ENCODE measurements at regions of chr3 and their contacts with region 1.

Region 1: DNA sequence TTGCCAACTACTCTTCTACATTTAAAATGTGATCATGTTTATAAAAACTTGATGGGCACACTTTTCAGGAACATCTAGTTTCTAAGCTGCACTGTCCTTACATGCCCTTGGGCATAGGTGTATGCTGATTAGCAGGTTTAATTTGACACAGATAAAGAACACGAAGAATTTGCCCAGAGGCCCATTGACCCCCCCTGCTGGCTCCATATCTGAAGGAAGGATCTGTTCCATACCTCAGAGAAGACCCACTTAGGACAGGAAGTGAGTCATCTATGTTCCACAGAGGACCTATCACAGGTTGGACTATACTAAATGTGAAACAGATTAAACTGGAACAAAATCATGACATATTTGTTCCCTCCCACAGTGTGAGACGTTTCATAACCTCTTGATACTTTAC is 92.8 kb upstream of the LPP start:
- DNase-seq: peak; percentile 81
- H3K4me3 Mint-ChIP-seq: peak overlapping the region; percentile 44
- H3K27ac Mint-ChIP-seq: peak overlapping the region; percentile 80
- H3K4me1 Mint-ChIP-seq: peaks cover 35% of the 10 kb centered on the region
- H3K27me3 Mint-ChIP-seq: no peaks in the 10 kb centered on the region

Region 2: GRCh38 chr3:187986514-187986934 is 74.6 kb before region 1 on chr3:
- CTCF ChIA-PET with region 1: no interaction called
- POLR2A ChIA-PET with region 1: no interaction called
- intact Hi-C with region 1: loop called (anchors 2 kb)
- DNase-seq: peak; percentile 77
- H3K4me3 Mint-ChIP-seq: peak overlapping the region; percentile 2
- H3K27ac Mint-ChIP-seq: peak overlapping the region; percentile 83
- H3K4me1 Mint-ChIP-seq: peaks cover 56% of the 10 kb centered on the region
- H3K27me3 Mint-ChIP-seq: no peaks in the 10 kb centered on the region

Region 3: GRCh38 chr3:188123170-188123905 is 62.2 kb after region 1 on chr3:
- CTCF ChIA-PET with region 1: no interaction called
- POLR2A ChIA-PET with region 1: no interaction called
- intact Hi-C with region 1: loop called (anchors 5 kb)
- DNase-seq: peak; percentile 21
- H3K4me3 Mint-ChIP-seq: no peak overlapping the region
- H3K27ac Mint-ChIP-seq: peak overlapping the region; percentile 63
- H3K4me1 Mint-ChIP-seq: peaks cover 20% of the 10 kb centered on the region
- H3K27me3 Mint-ChIP-seq: peaks cover 1% of the 10 kb centered on the region

Region 4: DNA sequence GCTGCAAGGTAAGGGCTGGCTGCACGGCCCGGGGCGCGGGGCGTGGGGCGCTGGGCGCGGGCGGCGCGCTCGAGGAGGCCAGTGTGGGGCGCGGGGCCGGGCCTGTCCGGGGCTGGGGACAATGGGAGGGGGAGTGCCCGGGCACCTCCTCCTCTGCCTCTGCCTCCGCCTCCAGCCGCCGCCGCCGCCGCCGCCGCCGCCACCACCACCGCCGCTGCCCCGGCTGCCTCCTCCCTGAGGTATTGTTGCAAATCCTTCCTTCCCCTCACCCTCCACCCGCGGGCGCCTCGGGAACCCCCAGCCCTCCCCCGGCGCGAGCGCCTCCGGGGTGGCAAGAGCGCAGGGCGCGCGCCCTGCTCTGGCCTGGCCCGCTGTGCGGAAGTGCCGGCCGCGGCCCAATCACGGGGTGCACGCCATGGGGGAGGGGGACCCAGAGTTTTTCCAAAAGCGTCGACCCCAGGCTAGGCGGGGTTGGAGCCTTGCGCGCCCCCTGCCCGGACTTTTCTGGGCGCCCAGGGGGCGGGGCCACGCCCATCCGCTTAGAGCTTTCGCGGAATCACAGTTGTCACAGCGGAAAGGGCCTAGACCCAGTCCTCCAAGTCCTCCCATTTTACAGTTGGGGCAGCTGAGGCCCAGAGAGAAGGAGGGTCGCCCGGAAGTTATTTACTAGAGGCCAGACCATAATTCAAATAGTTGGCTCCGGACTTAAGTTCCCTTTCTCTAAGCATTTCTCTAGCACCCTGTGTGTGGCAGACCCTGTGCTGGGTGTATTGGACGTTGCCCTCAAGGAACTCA is 93.1 kb after region 1 on chr3 and contains the start of gene LPP:
- CTCF ChIA-PET with region 1: no interaction called
- POLR2A ChIA-PET with region 1: no interaction called
- intact Hi-C with region 1: loop called (anchors 5 kb)
- DNase-seq: peak; percentile 91
- H3K4me3 Mint-ChIP-seq: peak within 1 kb of the TSS; percentile 88
- H3K27ac Mint-ChIP-seq: peak within 1 kb of the TSS; percentile 97
- H3K4me1 Mint-ChIP-seq: peaks cover 63% of the 10 kb centered on the region
- H3K27me3 Mint-ChIP-seq: no peaks in the 10 kb centered on the region
- total RNA-seq, gene LPP: 41.0 to 43.6 TPM

Region 5: GRCh38 chr3:188164248-188164687 is 103.1 kb after region 1 on chr3:
- CTCF ChIA-PET with region 1: no interaction called
- POLR2A ChIA-PET with region 1: no interaction called
- intact Hi-C with region 1: loop called (anchors 2 kb)
- DNase-seq: peak; percentile 59
- H3K4me3 Mint-ChIP-seq: no peak overlapping the region
- H3K27ac Mint-ChIP-seq: peak overlapping the region; percentile 76
- H3K4me1 Mint-ChIP-seq: peaks cover 62% of the 10 kb centered on the region
- H3K27me3 Mint-ChIP-seq: no peaks in the 10 kb centered on the region

Region 6: DNA sequence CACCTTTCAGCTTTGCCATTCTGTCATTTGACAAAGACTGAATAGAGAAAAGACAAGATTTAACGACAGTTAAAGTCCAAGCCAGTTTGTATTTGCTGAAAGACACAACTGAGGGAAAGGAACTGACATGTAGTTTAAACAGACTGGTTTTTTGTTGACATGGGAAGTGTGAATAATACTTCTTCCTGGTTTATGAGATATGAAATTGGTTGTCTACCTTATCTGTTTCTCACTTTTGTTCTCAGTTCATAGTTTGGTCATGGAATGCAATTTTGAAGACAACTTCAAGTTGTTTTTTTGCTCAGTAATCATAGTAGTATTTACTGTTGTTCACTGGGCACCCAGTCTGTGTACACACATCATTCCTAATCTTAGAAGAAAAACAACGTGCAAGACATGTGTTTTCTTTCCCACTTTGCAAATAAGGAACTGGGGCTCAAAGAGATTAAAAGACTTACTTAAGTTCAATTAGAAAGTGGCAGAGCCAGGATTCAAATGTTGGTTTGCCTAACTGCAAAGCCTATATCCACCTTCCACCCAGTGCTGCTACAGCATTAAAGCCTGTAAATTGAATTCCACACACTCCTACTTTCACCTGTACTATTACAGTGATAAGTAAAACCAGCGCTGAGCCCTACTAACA is 196.4 kb after region 1 on chr3:
- CTCF ChIA-PET with region 1: no interaction called
- POLR2A ChIA-PET with region 1: no interaction called
- intact Hi-C with region 1: loop called (anchors 1 kb)
- DNase-seq: no peak
- H3K4me3 Mint-ChIP-seq: no peak overlapping the region
- H3K27ac Mint-ChIP-seq: peak overlapping the region; percentile 47
- H3K4me1 Mint-ChIP-seq: peaks cover 49% of the 10 kb centered on the region
- H3K27me3 Mint-ChIP-seq: no peaks in the 10 kb centered on the region

Region 7: DNA sequence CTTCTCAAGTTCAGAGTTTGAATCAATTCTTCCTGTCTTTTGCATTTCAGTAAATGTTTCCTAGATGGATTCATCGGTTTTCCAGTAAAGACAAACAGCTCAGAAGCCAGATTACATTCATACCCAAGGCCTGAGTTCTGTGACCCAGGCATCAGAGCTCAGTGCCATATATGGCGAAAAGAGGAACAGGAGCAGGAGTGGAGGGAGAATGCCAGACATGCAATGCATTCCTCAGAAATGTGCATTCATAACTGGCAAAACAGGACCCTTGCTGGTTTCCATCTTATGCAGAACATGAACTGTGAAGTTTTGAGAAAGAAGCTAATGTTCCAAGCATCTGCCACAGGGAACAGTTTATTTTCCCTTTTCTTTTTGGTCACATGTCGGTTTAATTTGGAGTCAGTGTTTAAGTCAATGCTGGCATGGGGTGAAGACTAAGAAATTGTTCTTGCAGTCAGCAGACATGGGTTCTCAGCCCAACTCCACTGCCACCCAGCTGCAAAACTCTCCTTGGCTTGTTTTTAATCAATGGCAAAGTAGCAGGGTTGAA is 209.4 kb after region 1 on chr3:
- CTCF ChIA-PET with region 1: no interaction called
- POLR2A ChIA-PET with region 1: no interaction called
- intact Hi-C with region 1: no loop called
- DNase-seq: no peak
- H3K4me3 Mint-ChIP-seq: no peak overlapping the region
- H3K27ac Mint-ChIP-seq: no peak overlapping the region
- H3K4me1 Mint-ChIP-seq: peaks cover 34% of the 10 kb centered on the region
- H3K27me3 Mint-ChIP-seq: no peaks in the 10 kb centered on the region

Region 8: GRCh38 chr3:188697127-188697526 is 636.0 kb after region 1 on chr3:
- CTCF ChIA-PET with region 1: no interaction called
- POLR2A ChIA-PET with region 1: no interaction called
- intact Hi-C with region 1: loop called (anchors 5 kb)
- DNase-seq: peak; percentile 55
- H3K4me3 Mint-ChIP-seq: no peak overlapping the region
- H3K27ac Mint-ChIP-seq: peak overlapping the region; percentile 7
- H3K4me1 Mint-ChIP-seq: peaks cover 50% of the 10 kb centered on the region
- H3K27me3 Mint-ChIP-seq: peaks cover 7% of the 10 kb centered on the region

Measured in activated CD4-positive, alpha-beta memory T cell treated with anti-CD3 and anti-CD28 coated beads for 36 hours (primary cell).